ENCODE measurements at regions of chr1 and their contacts with region 1.

Region 1: DNA sequence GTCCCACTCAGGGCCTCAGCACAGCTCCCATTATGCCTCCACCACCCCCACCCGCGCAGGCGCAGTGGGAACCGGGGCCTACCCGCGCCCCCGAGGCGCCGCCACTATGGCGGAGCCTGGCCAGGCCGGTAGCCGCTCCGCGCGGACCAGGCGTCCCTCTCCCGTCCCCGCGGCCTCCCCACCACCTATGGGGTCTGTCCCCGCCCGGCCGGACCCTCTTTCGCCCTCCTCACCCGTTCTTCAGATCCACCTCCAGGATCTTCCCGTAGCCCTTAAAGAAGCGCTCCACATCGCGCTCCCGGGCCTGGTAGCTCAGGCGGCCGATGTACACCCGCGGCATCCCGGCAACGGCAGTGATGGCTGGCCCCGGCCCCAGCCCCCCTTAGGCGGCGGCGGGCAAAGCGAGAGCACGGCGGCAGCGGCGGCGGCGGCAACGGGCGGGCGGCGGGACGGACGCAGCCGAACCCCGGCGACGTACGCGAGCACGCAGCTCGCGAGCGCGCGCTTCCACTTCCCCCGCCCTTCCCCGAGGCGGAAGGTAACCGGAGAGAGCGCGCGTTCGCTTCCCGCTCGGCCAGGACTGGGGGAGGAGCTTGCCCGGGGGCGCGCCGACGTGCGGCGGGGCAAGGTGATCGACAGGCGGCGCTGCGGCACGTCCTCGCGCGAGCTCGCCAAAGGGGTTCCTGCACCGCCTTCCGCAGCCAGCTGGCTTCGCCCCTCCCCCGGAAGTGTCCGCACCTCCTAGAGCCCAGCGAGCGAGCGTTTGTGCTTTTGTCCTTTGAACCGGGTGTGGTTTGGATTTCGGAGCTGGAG is at the start of gene SRSF4:
- DNase-seq: peak; percentile 86 to 99
- H3K4me3 ChIP-seq: peak within 1 kb of the TSS; percentile 92
- H3K27ac ChIP-seq: peak within 1 kb of the TSS; percentile 88
- H3K4me1 ChIP-seq: peaks cover 33% of the 10 kb centered on the region
- H3K27me3 ChIP-seq: no peaks in the 10 kb centered on the region
- CTCF ChIP-seq: peak; percentile 60
- total RNA-seq, gene SRSF4: 75.7 and 87.6 TPM in 2 replicates

Region 2: DNA sequence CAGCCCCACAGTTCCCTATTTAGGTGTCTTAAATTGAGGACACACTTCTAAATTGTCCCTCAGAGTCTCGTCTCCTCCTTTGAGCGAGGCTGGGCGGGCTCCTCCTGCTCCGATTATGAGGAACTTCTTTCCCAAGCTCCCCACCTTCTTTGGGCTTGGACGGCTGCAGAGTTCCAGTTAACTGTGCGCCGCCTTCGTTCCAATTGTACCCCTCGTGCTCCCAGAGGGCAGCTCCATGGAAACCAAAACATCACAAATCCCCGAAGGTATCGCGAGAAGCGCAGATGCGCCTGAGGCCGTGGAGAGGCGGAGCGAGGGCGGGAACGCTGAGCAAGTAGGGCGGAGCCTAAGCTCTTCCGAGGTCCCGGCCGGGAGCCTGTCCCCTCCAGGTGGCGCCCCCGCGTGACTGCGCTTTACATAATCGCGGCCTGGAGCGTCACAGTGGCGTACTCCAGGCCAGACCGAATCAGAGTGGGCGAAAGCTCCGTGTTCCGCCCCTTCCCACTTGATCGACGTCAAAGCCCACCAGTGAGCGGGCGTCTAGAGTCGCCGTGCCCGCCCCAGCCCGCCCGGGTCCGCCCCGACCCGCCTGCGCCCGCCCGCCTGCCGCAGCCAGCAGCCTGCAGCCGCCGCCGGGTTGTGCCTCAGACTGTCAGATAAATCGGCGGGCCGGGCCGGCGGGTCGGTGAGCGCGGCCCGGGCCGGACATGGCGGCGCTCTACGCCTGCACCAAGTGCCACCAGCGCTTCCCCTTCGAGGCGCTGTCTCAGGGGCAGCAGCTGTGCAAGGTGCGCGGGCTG is 1456.0 kb before region 1 on chr1 and contains the start of gene FAM76A:
- CTCF ChIA-PET with region 1: no interaction called
- POLR2A ChIA-PET with region 1: interaction called, 20 read pairs
- intact Hi-C with region 1: no loop called
- DNase-seq: peak; percentile 89 to 98
- H3K4me3 ChIP-seq: peak within 1 kb of the TSS; percentile 68
- H3K27ac ChIP-seq: peak within 1 kb of the TSS; percentile 12; the same call in 1 of the 2 replicates
- H3K4me1 ChIP-seq: no peaks in the 10 kb centered on the region
- H3K27me3 ChIP-seq: no peaks in the 10 kb centered on the region
- CTCF ChIP-seq: no peak; the same call in 1 of the 2 replicates
- total RNA-seq, gene FAM76A: 9.4 and 9.9 TPM in 2 replicates

Region 3: GRCh38 chr1:28470146-28470545 is 711.5 kb before region 1 on chr1:
- CTCF ChIA-PET with region 1: no interaction called
- POLR2A ChIA-PET with region 1: interaction called, 18 read pairs
- intact Hi-C with region 1: no loop called
- DNase-seq: no peak
- H3K4me3 ChIP-seq: no peak overlapping the region
- H3K27ac ChIP-seq: no peak overlapping the region
- H3K4me1 ChIP-seq: peaks cover 8% of the 10 kb centered on the region
- H3K27me3 ChIP-seq: no peaks in the 10 kb centered on the region
- CTCF ChIP-seq: no peak

Region 4: GRCh38 chr1:29145739-29146437 is 35.7 kb before region 1 on chr1:
- CTCF ChIA-PET with region 1: no interaction called
- POLR2A ChIA-PET with region 1: interaction called, 4 read pairs
- intact Hi-C with region 1: loop called (anchors 1 kb)
- DNase-seq: peak; percentile 45 to 65
- H3K4me3 ChIP-seq: no peak overlapping the region
- H3K27ac ChIP-seq: peak overlapping the region; percentile 61
- H3K4me1 ChIP-seq: peaks cover 8% of the 10 kb centered on the region
- H3K27me3 ChIP-seq: no peaks in the 10 kb centered on the region
- CTCF ChIP-seq: no peak

Region 5: GRCh38 chr1:29415156-29415830 is 233.7 kb after region 1 on chr1:
- CTCF ChIA-PET with region 1: no interaction called
- POLR2A ChIA-PET with region 1: no interaction called
- intact Hi-C with region 1: no loop called
- DNase-seq: peak in 1 of 2 experiments; percentile 29
- H3K4me3 ChIP-seq: no peak overlapping the region
- H3K27ac ChIP-seq: no peak overlapping the region
- H3K4me1 ChIP-seq: no peaks in the 10 kb centered on the region
- H3K27me3 ChIP-seq: no peaks in the 10 kb centered on the region
- CTCF ChIP-seq: peak; percentile 37; the same call in 1 of the 2 replicates

Measured in PC-9 (cell line).